Activated CD8-positive, alpha-beta T cell treated with anti-CD3 and anti-CD28 coated beads for 36 hours (primary cell): ENCODE measurements at regions of chr1 and their contacts with region 1.

Region 1: GRCh38 chr1:193754732-193755427 is 568.5 kb upstream of the B3GALT2 start:
- DNase-seq: no peak
- ATAC-seq: no peak
- H3K4me3 Mint-ChIP-seq: no peak overlapping the region
- H3K27ac Mint-ChIP-seq: no peak overlapping the region
- H3K4me1 Mint-ChIP-seq: no peaks in the 10 kb centered on the region
- H3K27me3 Mint-ChIP-seq: no peaks in the 10 kb centered on the region
- CTCF ChIP-seq: peak; percentile 11

Region 2: GRCh38 chr1:193406901-193407300 is 348.0 kb before region 1 on chr1:
- CTCF ChIA-PET with region 1: no interaction called
- POLR2A ChIA-PET with region 1: no interaction called
- intact Hi-C with region 1: loop called (anchors 5 kb)
- DNase-seq: peak; percentile 16
- ATAC-seq: peak; percentile 52
- H3K4me3 Mint-ChIP-seq: no peak overlapping the region
- H3K27ac Mint-ChIP-seq: peak overlapping the region; percentile 31
- H3K4me1 Mint-ChIP-seq: peaks cover 21% of the 10 kb centered on the region
- H3K27me3 Mint-ChIP-seq: no peaks in the 10 kb centered on the region
- CTCF ChIP-seq: peak; percentile 75

Region 3: GRCh38 chr1:193462629-193463320 is 292.1 kb before region 1 on chr1:
- CTCF ChIA-PET with region 1: no interaction called
- POLR2A ChIA-PET with region 1: no interaction called
- intact Hi-C with region 1: no loop called
- DNase-seq: no peak
- ATAC-seq: peak; percentile 37
- H3K4me3 Mint-ChIP-seq: peak overlapping the region; percentile 20
- H3K27ac Mint-ChIP-seq: peak overlapping the region; percentile 20
- H3K4me1 Mint-ChIP-seq: peaks cover 37% of the 10 kb centered on the region
- H3K27me3 Mint-ChIP-seq: no peaks in the 10 kb centered on the region
- CTCF ChIP-seq: no peak

Region 4: GRCh38 chr1:193700710-193701355 is 54.0 kb before region 1 on chr1:
- CTCF ChIA-PET with region 1: no interaction called
- POLR2A ChIA-PET with region 1: no interaction called
- intact Hi-C with region 1: no loop called
- DNase-seq: no peak
- ATAC-seq: peak; percentile 92
- H3K4me3 Mint-ChIP-seq: no peak overlapping the region
- H3K27ac Mint-ChIP-seq: peak overlapping the region; percentile 32
- H3K4me1 Mint-ChIP-seq: peaks cover 22% of the 10 kb centered on the region
- H3K27me3 Mint-ChIP-seq: no peaks in the 10 kb centered on the region
- CTCF ChIP-seq: no peak